CD8-positive, alpha-beta T cell (primary cell): ENCODE measurements at regions of chr1 and their contacts with region 1.

Region 1: DNA sequence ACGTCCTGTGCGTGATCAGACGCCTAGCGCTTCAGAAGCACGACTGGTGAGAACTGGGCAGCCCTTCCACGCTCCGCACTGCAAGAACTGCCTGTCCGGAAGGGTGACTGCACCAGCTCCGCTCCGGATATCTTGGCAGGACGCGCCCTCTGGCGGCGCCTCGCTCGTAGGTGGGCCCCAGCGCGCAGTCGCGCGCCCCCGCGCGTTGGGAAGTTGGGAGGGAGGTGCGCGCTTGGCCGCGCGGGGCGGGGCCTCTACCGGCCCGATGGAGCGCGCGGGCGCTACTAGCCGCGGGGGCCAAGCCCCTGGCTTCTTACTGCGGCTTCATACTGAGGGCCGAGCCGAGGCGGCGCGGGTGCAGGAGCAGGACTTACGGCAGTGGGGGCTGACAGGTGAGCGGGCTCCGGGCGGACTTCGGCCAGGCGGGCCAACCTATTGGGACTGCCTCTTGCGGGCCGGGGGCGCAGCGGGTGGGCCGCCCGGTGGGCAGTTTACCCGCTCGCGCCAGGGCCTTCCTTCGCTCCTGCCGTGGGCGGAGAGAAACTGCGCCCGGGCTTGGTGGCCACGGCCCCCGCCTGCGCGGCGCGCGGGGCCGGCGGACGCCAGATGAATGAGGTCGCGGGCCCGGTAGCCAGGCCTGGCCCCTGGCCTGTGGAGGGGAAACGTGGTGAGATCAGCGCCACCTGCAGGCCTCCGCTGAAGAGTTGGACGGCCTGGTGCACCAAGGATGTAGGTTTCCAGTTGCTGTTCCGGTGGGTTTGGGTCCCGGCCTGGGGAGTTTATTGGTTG is at the start of gene CHD1L:
- DNase-seq: peak; percentile 88 to 97 (median 93)
- ATAC-seq: peak; percentile 94
- H3K4me3 ChIP-seq: peak within 1 kb of the TSS; percentile 85 to 87
- H3K4me3 Mint-ChIP-seq: peak within 1 kb of the TSS; percentile 87
- H3K27ac ChIP-seq: peak within 1 kb of the TSS; percentile 51 to 57
- H3K27ac Mint-ChIP-seq: peak within 1 kb of the TSS; percentile 68
- H3K4me1 ChIP-seq: peaks cover 29% of the 10 kb centered on the region
- H3K4me1 Mint-ChIP-seq: peaks cover 42% of the 10 kb centered on the region
- H3K27me3 ChIP-seq: no peaks in the 10 kb centered on the region
- H3K27me3 Mint-ChIP-seq: no peaks in the 10 kb centered on the region
- CTCF ChIP-seq: peak; percentile 72
- total RNA-seq, gene CHD1L: 27.9 to 29.0 TPM

Region 2: DNA sequence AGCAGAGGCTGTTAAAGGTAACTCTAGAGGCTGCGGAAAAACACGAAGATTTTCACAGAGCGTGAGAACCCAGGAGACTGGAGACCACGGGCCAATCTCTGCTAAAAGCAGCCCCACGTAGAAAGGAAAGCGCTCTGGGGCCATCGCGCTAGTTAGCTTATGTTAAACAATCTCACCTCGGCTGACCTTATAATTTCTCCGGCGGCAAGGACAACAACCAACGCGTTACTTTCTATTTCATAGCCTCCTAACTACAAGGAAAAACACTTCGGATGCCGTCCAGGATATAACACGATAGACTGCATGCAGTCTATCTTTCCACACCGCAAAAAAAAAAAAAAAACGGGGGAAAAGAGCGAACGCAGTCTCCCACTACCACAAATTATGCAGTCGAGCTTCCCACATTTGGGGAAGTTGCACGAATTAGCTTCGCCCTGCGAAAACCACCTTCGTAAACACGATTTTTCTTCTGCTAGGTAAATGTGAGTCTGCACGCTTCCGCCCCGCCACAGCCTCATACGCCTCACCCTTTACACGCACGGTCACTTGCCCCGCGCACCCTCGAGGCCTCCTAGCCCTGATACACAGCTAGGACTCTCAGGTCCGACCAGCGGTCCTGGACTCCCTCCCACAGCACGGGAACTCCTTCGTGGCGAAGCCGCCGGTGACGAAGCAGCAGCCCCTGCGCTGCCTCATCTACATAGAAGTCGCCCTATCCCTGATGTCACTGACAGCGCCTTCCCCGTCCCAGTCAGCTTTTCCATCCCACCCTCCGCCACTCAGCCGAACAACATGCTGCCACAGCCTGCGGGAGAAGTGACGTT is 158.1 kb before region 1 on chr1:
- CTCF ChIA-PET with region 1: interaction called, 6 read pairs
- POLR2A ChIA-PET with region 1: interaction called, 10 read pairs
- intact Hi-C with region 1: loop called (anchors 2 to 5 kb)
- DNase-seq: peak; percentile 18 to 84 (median 67)
- ATAC-seq: peak; percentile 81
- H3K4me3 ChIP-seq: peak overlapping the region; percentile 67 to 74
- H3K4me3 Mint-ChIP-seq: peak overlapping the region; percentile 94
- H3K27ac ChIP-seq: peak overlapping the region; percentile 77 to 82
- H3K27ac Mint-ChIP-seq: peak overlapping the region; percentile 100
- H3K4me1 ChIP-seq: peaks cover 21% of the 10 kb centered on the region
- H3K4me1 Mint-ChIP-seq: peaks cover 34% of the 10 kb centered on the region
- H3K27me3 ChIP-seq: peaks cover 19 to 22% of the 10 kb centered on the region in 2 experiments
- H3K27me3 Mint-ChIP-seq: peaks cover 35% of the 10 kb centered on the region
- CTCF ChIP-seq: no peak

Region 3: DNA sequence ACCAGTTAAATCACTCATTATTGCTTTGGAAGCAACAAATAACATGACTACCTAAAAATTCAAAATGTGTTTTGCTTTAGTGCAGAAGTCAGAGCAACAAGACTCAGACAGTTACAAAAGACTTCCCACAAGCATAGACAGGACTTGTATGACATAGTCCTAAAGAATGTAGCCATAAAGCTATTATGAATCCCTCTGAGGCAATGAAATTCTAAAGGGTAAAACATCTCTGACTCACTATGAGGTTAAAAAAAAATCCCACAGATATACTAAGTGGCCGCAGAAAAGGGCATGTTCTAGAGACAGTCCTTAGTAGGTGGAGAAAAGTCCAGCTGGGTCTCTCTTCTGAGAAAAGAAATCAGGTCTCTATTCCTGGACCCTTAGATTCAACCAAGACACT is 75.3 kb before region 1 on chr1:
- CTCF ChIA-PET with region 1: interaction called, 16 read pairs
- POLR2A ChIA-PET with region 1: interaction called, 41 read pairs
- intact Hi-C with region 1: loop called (anchors 1 kb)
- DNase-seq: no peak
- ATAC-seq: no peak
- H3K4me3 ChIP-seq: no peak overlapping the region
- H3K4me3 Mint-ChIP-seq: no peak overlapping the region
- H3K27ac ChIP-seq: no peak overlapping the region
- H3K27ac Mint-ChIP-seq: no peak overlapping the region
- H3K4me1 ChIP-seq: peaks cover 11% of the 10 kb centered on the region
- H3K4me1 Mint-ChIP-seq: peaks cover 31% of the 10 kb centered on the region
- H3K27me3 ChIP-seq: no peaks in the 10 kb centered on the region
- H3K27me3 Mint-ChIP-seq: no peaks in the 10 kb centered on the region
- CTCF ChIP-seq: no peak

Region 4: GRCh38 chr1:147172168-147172992 is 70.3 kb before region 1 on chr1 and contains the start of gene PRKAB2:
- CTCF ChIA-PET with region 1: interaction called, 25 read pairs
- POLR2A ChIA-PET with region 1: interaction called, 41 read pairs
- intact Hi-C with region 1: loop called (anchors 1 kb)
- DNase-seq: peak; percentile 74 to 94 (median 88)
- ATAC-seq: peak; percentile 79
- H3K4me3 ChIP-seq: peak within 1 kb of the TSS; percentile 85 to 96
- H3K4me3 Mint-ChIP-seq: peak within 1 kb of the TSS; percentile 96
- H3K27ac ChIP-seq: peak within 1 kb of the TSS; percentile 57 to 85
- H3K27ac Mint-ChIP-seq: peak within 1 kb of the TSS; percentile 95
- H3K4me1 ChIP-seq: peaks cover 16% of the 10 kb centered on the region
- H3K4me1 Mint-ChIP-seq: peaks cover 49% of the 10 kb centered on the region
- H3K27me3 ChIP-seq: no peaks in the 10 kb centered on the region
- H3K27me3 Mint-ChIP-seq: no peaks in the 10 kb centered on the region
- CTCF ChIP-seq: peak; percentile 83
- total RNA-seq, gene PRKAB2: 5.2 to 5.8 TPM

Region 5: GRCh38 chr1:147225193-147225730 is 17.4 kb before region 1 on chr1 and contains the start of gene FMO5:
- CTCF ChIA-PET with region 1: interaction called, 7 read pairs
- POLR2A ChIA-PET with region 1: interaction called, 9 read pairs
- intact Hi-C with region 1: loop called in 1 of 2 experiments (anchors 1 kb)
- DNase-seq: peak; percentile 3 to 72 (median 50)
- ATAC-seq: peak; percentile 95
- H3K4me3 ChIP-seq: peak within 1 kb of the TSS; percentile 68 to 81
- H3K4me3 Mint-ChIP-seq: peak within 1 kb of the TSS; percentile 95
- H3K27ac ChIP-seq: peak within 1 kb of the TSS; percentile 2 to 62
- H3K27ac Mint-ChIP-seq: peak within 1 kb of the TSS; percentile 80
- H3K4me1 ChIP-seq: peaks cover 5% of the 10 kb centered on the region
- H3K4me1 Mint-ChIP-seq: peaks cover 15% of the 10 kb centered on the region
- H3K27me3 ChIP-seq: no peaks in the 10 kb centered on the region
- H3K27me3 Mint-ChIP-seq: no peaks in the 10 kb centered on the region
- CTCF ChIP-seq: no peak
- total RNA-seq, gene FMO5: 0.43 to 1.3 TPM